Keratinocyte (primary cell): ENCODE measurements at regions of chr4 and their contacts with region 1.

Region 1: GRCh38 chr4:104073245-104073644 is 353.5 kb upstream of the TACR3 start:
- DNase-seq: no peak
- H3K4me3 ChIP-seq: no peak overlapping the region
- H3K27ac ChIP-seq: no peak overlapping the region
- H3K4me1 ChIP-seq: no peaks in the 10 kb centered on the region
- H3K27me3 ChIP-seq: no peaks in the 10 kb centered on the region
- CTCF ChIP-seq: no peak

Region 2: DNA sequence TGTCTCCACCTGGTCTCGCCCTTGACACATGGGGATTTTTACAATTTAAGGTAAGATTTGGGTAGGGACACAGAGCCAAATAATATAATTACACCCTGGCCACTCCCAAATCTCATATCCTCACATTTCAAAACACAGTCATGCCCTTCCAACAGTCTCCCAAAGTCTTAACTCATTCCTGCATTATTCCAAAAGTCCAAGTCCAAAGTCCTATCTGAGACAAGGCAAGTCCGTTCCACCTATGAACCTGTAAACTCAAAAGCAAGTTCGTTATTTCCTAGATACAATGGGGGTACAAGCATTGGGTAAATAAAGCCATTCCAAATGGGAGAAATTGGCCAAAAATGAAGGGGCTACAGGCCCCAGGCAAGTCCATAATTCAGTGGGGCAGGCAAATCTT is 40.6 kb after region 1 on chr4:
- dilution Hi-C with region 1: no loop called
- DNase-seq: no peak
- H3K4me3 ChIP-seq: no peak overlapping the region
- H3K27ac ChIP-seq: no peak overlapping the region
- H3K4me1 ChIP-seq: no peaks in the 10 kb centered on the region
- H3K27me3 ChIP-seq: no peaks in the 10 kb centered on the region
- CTCF ChIP-seq: no peak

Region 3: DNA sequence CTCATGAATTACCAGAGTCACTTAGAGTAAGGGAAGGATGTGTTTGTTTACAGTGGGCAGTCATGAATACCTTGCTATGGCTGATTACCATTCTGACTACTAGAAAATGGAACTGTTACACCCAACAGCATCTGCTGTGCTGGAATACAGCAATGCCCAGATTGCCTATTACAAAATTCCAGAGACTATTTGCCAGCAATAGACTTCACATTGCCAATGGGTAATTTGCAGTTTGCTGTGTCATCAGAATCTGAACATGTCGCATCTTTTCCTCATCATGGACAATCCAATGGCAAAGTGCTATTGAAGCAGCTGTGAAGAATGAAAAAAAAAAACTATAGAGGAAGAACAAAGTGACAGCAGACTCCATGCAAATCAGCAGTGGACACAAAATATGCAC is 64.9 kb after region 1 on chr4:
- dilution Hi-C with region 1: loop called (anchors 5 kb)
- DNase-seq: no peak
- H3K4me3 ChIP-seq: no peak overlapping the region
- H3K27ac ChIP-seq: no peak overlapping the region
- H3K4me1 ChIP-seq: no peaks in the 10 kb centered on the region
- H3K27me3 ChIP-seq: no peaks in the 10 kb centered on the region
- CTCF ChIP-seq: no peak

Region 4: GRCh38 chr4:104330125-104330905 is 257.1 kb after region 1 on chr4:
- dilution Hi-C with region 1: no loop called
- DNase-seq: no peak
- H3K4me3 ChIP-seq: no peak overlapping the region
- H3K27ac ChIP-seq: no peak overlapping the region
- H3K4me1 ChIP-seq: no peaks in the 10 kb centered on the region
- H3K27me3 ChIP-seq: no peaks in the 10 kb centered on the region
- CTCF ChIP-seq: no peak